Left ventricle myocardium inferior (tissue), 1 donor: ENCODE measurements at regions of chr5 and their contacts with region 1.

Region 1: DNA sequence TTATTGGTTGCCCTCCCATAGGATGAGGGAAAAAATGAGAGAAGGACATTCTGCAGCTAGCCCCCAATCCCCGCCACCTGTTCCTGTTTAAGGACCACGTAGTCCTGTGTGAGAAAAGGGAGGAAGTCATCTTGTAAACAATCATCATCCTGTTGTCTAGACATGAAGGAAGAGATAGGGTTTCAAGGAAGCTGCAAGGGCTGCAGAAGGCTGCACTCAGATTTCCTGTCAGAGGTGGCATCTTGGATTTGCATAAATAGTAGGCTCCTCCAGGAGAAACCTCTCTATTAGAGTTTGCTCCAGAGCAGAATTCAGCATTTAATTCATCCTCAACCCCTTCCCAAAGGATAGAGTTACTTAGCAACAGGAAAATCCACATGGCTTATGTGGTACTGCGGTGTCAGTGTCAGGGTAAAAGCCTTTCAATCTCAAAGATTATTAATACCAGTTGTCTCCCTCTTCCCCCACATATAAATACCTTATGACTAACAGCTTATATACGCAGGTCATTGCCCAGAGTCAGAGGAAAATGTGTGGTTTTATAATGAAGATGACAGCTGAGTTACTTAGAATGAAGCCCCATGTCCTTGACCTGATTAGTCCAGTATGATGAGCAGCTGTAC is 4.6 kb upstream of the DNAJC18 start:
- DNase-seq: no peak
- H3K4me3 ChIP-seq: no peak overlapping the region
- H3K27ac ChIP-seq: no peak overlapping the region
- H3K4me1 ChIP-seq: peaks cover 25% of the 10 kb centered on the region
- H3K27me3 ChIP-seq: no peaks in the 10 kb centered on the region
- CTCF ChIP-seq: no peak

Region 2: GRCh38 chr5:139492700-139493192 is 48.8 kb after region 1 on chr5:
- intact Hi-C with region 1: loop called (anchors 10 kb)
- DNase-seq: no peak
- H3K4me3 ChIP-seq: peak overlapping the region; percentile 9
- H3K27ac ChIP-seq: peak overlapping the region; percentile 51
- H3K4me1 ChIP-seq: peaks cover 23% of the 10 kb centered on the region
- H3K27me3 ChIP-seq: no peaks in the 10 kb centered on the region
- CTCF ChIP-seq: peak; percentile 18